ENCODE measurements at regions of chr6 and their contacts with region 1.

Region 1: DNA sequence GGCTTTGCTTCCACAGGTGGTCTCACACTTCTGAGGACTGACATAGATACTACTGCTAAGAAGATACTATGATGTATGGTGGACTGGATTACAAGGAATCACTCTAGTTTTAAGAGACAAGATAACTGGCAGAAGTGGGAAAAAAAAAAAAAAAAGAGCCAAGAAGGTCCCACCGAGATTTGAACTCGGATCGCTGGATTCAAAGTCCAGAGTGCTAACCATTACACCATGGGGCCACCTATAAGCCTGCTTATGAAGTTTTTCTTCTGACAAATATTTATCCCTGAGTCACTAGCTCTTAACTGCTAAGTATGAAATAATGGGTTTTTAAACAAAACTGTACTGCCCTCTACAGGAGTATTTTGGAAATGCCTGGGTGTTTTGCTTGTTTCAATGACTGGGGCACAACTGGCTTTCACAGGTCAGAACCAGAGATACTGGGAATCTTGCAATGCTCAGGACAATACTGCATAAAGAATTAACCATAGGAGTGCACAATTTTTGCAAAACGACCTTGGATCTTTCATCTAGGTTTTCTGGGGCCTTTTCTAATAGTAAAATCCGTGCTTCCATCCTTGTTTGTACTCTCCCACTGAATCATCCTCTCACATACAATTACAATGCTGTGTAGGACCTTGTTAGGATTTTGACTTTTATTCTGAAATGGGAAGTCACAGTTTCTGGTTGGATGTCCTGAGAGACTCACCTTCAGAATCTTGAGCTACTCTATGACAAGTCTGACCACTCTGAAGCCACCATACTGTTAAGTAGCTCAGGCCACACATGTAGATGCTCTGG is 116.3 kb downstream of the OR2B2 start:
- DNase-seq: peak; percentile 54
- ATAC-seq: peak; percentile 62
- H3K4me3 Mint-ChIP-seq: no peak overlapping the region
- H3K27ac Mint-ChIP-seq: peak overlapping the region; percentile 60
- H3K4me1 Mint-ChIP-seq: peaks cover 43% of the 10 kb centered on the region
- H3K27me3 Mint-ChIP-seq: peaks cover 10% of the 10 kb centered on the region

Region 2: GRCh38 chr6:27700337-27700736 is 95.6 kb before region 1 on chr6:
- CTCF ChIA-PET with region 1: no interaction called
- DNase-seq: no peak
- ATAC-seq: no peak
- H3K4me3 Mint-ChIP-seq: no peak overlapping the region
- H3K27ac Mint-ChIP-seq: peak overlapping the region; percentile 4
- H3K4me1 Mint-ChIP-seq: peaks cover 33% of the 10 kb centered on the region
- H3K27me3 Mint-ChIP-seq: no peaks in the 10 kb centered on the region

Region 3: GRCh38 chr6:27761391-27761790 is 34.5 kb before region 1 on chr6:
- CTCF ChIA-PET with region 1: interaction called, 28 read pairs
- DNase-seq: no peak
- ATAC-seq: no peak
- H3K4me3 Mint-ChIP-seq: no peak overlapping the region
- H3K27ac Mint-ChIP-seq: peak overlapping the region; percentile 54
- H3K4me1 Mint-ChIP-seq: peaks cover 29% of the 10 kb centered on the region
- H3K27me3 Mint-ChIP-seq: peaks cover 7% of the 10 kb centered on the region

Region 4: DNA sequence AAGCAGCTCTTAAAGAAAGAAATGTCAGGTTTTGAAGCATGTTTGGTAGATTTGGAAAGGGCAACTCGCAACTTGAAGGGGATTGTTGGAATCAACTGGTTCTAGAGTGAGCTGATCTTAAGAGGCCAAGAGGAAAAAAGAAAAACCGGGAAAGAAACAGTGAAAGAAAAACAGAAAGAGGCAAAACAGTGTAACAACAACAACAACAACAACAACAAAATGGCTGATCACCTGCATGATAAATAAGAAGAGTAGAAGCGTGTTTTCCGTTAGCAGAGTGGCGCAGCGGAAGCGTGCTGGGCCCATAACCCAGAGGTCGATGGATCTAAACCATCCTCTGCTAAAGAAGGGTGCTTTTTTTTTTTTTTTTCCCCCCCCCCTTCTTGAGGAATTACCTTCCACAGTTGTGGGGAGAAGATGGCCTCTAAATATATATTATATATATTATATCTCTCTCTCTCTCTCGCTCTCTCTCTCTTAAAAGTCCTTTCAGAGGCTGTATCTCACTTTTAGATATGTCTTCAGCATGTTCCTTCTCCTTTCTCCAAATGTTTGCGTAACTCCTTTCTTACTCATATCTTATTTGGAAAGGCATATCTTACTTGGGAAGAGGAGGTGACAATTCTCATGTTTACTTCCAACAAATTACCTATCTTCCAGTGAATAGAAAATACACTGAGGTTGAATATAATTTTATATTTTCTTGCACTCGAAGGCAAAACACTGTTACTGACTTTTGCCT is 18.1 kb before region 1 on chr6:
- CTCF ChIA-PET with region 1: interaction called, 12 read pairs
- DNase-seq: no peak
- ATAC-seq: no peak
- H3K4me3 Mint-ChIP-seq: no peak overlapping the region
- H3K27ac Mint-ChIP-seq: no peak overlapping the region
- H3K4me1 Mint-ChIP-seq: peaks cover 12% of the 10 kb centered on the region
- H3K27me3 Mint-ChIP-seq: peaks cover 43% of the 10 kb centered on the region

Region 5: DNA sequence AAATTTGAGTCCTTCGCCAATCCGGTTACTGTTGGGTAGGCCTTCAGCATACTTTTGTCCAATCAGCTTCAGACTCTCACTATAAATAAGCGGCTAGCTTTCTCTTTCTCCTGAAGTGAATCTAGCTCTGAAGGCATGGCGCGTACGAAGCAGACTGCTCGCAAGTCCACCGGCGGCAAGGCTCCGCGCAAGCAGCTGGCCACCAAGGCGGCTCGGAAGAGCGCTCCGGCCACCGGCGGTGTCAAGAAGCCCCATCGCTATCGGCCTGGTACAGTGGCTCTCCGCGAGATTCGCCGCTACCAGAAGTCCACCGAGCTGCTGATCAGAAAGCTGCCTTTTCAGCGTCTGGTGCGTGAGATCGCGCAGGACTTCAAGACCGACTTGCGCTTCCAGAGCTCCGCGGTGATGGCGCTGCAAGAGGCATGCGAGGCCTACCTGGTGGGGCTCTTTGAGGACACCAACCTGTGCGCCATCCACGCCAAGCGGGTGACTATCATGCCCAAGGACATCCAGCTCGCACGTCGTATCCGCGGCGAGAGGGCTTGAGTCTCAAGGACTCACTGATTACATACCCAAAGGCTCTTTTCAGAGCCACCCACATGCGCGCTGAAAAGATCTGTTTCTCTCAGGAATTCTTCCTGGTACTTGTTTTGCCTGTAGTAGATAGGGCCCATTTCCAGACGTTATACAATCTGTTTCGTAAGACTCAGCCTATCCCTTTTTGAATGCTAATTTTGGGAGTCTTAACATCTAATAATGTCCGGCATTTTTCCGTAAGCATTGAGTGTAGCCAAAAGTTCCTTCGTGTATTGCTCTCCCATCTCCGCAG is 14.3 kb after region 1 on chr6:
- CTCF ChIA-PET with region 1: interaction called, 39 read pairs
- DNase-seq: peak; percentile 86
- ATAC-seq: peak; percentile 31
- H3K4me3 Mint-ChIP-seq: peak overlapping the region; percentile 94
- H3K27ac Mint-ChIP-seq: peak overlapping the region; percentile 95
- H3K4me1 Mint-ChIP-seq: peaks cover 64% of the 10 kb centered on the region
- H3K27me3 Mint-ChIP-seq: peaks cover 6% of the 10 kb centered on the region

Measured in activated CD8-positive, alpha-beta memory T cell treated with anti-CD3 and anti-CD28 coated beads, Interleukin-2, amount 10 ng/mL, durations not matched to agents 7 days and 5 days (primary cell).